ENCODE measurements at regions of chr5 and their contacts with region 1.

Region 1: GRCh38 chr5:73215891-73216610 is 43.1 kb downstream of the TMEM174 start:
- DNase-seq: peak; percentile 82
- H3K4me3 ChIP-seq: peak overlapping the region; percentile 9 to 37 (median 28)
- H3K27ac ChIP-seq: no peak overlapping the region
- H3K4me1 ChIP-seq: peaks cover 4% of the 10 kb centered on the region
- H3K27me3 ChIP-seq: peaks cover 49 to 67% of the 10 kb centered on the region in 2 experiments
- CTCF ChIP-seq: peak; percentile 83 to 85
- POLR2A ChIP-seq: no peak

Region 2: GRCh38 chr5:73088026-73088425 is 128.0 kb before region 1 on chr5:
- CTCF ChIA-PET with region 1: interaction called, 30 read pairs
- POLR2A ChIA-PET with region 1: no interaction called
- dilution Hi-C with region 1: no loop called
- intact Hi-C with region 1: loop called (anchors 1 kb)
- DNase-seq: no peak
- H3K4me3 ChIP-seq: no peak overlapping the region
- H3K27ac ChIP-seq: no peak overlapping the region
- H3K4me1 ChIP-seq: no peaks in the 10 kb centered on the region
- H3K27me3 ChIP-seq: no peaks in the 10 kb centered on the region
- CTCF ChIP-seq: no peak
- POLR2A ChIP-seq: no peak

Region 3: DNA sequence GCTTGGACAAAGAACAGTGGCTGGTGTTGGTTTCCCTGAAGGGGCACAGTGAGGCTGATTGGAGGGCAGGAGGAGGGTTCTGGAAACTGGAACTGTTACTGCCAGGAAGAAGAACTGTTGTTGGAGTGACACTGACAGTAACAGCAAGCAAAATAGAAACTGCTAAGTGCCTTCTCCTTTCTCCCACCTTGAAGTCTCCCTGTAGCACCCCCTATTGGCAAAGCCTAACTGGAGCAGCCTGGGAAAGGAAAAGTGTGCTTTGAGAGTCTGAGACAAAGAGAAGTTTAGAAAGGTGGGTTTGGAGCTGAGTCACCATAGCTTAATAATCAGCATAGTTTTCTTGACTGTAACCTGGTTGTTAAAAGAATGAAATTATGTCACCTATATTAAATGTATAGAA is 45.5 kb before region 1 on chr5:
- CTCF ChIA-PET with region 1: interaction called, 25 read pairs
- POLR2A ChIA-PET with region 1: no interaction called
- dilution Hi-C with region 1: no loop called
- intact Hi-C with region 1: no loop called
- DNase-seq: peak; percentile 62
- H3K4me3 ChIP-seq: no peak overlapping the region
- H3K27ac ChIP-seq: no peak overlapping the region
- H3K4me1 ChIP-seq: no peaks in the 10 kb centered on the region
- H3K27me3 ChIP-seq: peaks cover 21 to 41% of the 10 kb centered on the region in 2 experiments
- CTCF ChIP-seq: peak; percentile 75 to 79
- POLR2A ChIP-seq: no peak

Region 4: DNA sequence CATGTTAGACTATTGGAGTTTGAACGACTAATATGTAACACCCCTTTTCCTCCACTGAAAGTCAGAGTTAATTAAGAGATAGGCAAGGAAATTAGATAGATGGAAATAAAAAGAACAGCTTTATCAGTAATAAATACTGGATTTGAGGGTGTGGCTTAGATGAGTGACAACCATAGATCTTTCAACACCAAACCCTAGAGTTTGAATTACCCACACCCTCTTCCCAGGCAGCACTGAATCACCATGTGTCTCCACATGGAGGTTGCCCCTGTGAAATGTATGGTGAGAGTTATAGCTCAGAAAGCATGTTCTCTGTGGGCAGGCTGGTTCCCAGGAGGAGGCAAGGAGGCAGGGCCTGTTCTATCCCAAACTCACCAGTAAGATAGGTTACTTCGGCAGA is 26.7 kb after region 1 on chr5:
- CTCF ChIA-PET with region 1: interaction called, 24 read pairs
- POLR2A ChIA-PET with region 1: no interaction called
- dilution Hi-C with region 1: no loop called
- intact Hi-C with region 1: no loop called
- DNase-seq: no peak
- H3K4me3 ChIP-seq: no peak overlapping the region
- H3K27ac ChIP-seq: no peak overlapping the region
- H3K4me1 ChIP-seq: no peaks in the 10 kb centered on the region
- H3K27me3 ChIP-seq: peaks cover 51 to 76% of the 10 kb centered on the region in 2 experiments
- CTCF ChIP-seq: no peak
- POLR2A ChIP-seq: no peak

Region 5: GRCh38 chr5:73298772-73299630 is 83.0 kb after region 1 on chr5:
- CTCF ChIA-PET with region 1: interaction called, 49 read pairs
- POLR2A ChIA-PET with region 1: no interaction called
- dilution Hi-C with region 1: no loop called
- intact Hi-C with region 1: loop called (anchors 2 kb)
- DNase-seq: no peak
- H3K4me3 ChIP-seq: no peak overlapping the region
- H3K27ac ChIP-seq: no peak overlapping the region
- H3K4me1 ChIP-seq: no peaks in the 10 kb centered on the region
- H3K27me3 ChIP-seq: peaks cover 90 to 98% of the 10 kb centered on the region in 2 experiments
- CTCF ChIP-seq: peak; percentile 31 to 38
- POLR2A ChIP-seq: no peak

Region 6: GRCh38 chr5:73370640-73371583 is 154.9 kb after region 1 on chr5:
- CTCF ChIA-PET with region 1: interaction called, 12 read pairs
- POLR2A ChIA-PET with region 1: no interaction called
- dilution Hi-C with region 1: no loop called
- intact Hi-C with region 1: loop called (anchors 2 kb)
- DNase-seq: peak; percentile 97
- H3K4me3 ChIP-seq: peak overlapping the region in 1 of 3 experiments; percentile 0
- H3K27ac ChIP-seq: peak overlapping the region; percentile 86
- H3K4me1 ChIP-seq: peaks cover 33% of the 10 kb centered on the region
- H3K27me3 ChIP-seq: no peaks in the 10 kb centered on the region
- CTCF ChIP-seq: no peak
- POLR2A ChIP-seq: peak; percentile 69

Region 7: GRCh38 chr5:73464016-73464745 is 248.1 kb after region 1 on chr5:
- CTCF ChIA-PET with region 1: interaction called, 11 read pairs
- POLR2A ChIA-PET with region 1: no interaction called
- dilution Hi-C with region 1: no loop called
- intact Hi-C with region 1: no loop called
- DNase-seq: peak; percentile 94
- H3K4me3 ChIP-seq: no peak overlapping the region
- H3K27ac ChIP-seq: no peak overlapping the region
- H3K4me1 ChIP-seq: no peaks in the 10 kb centered on the region
- H3K27me3 ChIP-seq: peaks cover 37 to 53% of the 10 kb centered on the region in 2 experiments
- CTCF ChIP-seq: no peak
- POLR2A ChIP-seq: no peak

Region 8: GRCh38 chr5:73644385-73644963 is 428.4 kb after region 1 on chr5:
- CTCF ChIA-PET with region 1: no interaction called
- POLR2A ChIA-PET with region 1: no interaction called
- dilution Hi-C with region 1: no loop called
- intact Hi-C with region 1: no loop called
- DNase-seq: no peak
- H3K4me3 ChIP-seq: no peak overlapping the region
- H3K27ac ChIP-seq: no peak overlapping the region
- H3K4me1 ChIP-seq: peaks cover 47% of the 10 kb centered on the region
- H3K27me3 ChIP-seq: no peaks in the 10 kb centered on the region
- CTCF ChIP-seq: no peak
- POLR2A ChIP-seq: no peak